AG04450 (cell line): ENCODE measurements at regions of chr9 and their contacts with region 1.

Region 1: DNA sequence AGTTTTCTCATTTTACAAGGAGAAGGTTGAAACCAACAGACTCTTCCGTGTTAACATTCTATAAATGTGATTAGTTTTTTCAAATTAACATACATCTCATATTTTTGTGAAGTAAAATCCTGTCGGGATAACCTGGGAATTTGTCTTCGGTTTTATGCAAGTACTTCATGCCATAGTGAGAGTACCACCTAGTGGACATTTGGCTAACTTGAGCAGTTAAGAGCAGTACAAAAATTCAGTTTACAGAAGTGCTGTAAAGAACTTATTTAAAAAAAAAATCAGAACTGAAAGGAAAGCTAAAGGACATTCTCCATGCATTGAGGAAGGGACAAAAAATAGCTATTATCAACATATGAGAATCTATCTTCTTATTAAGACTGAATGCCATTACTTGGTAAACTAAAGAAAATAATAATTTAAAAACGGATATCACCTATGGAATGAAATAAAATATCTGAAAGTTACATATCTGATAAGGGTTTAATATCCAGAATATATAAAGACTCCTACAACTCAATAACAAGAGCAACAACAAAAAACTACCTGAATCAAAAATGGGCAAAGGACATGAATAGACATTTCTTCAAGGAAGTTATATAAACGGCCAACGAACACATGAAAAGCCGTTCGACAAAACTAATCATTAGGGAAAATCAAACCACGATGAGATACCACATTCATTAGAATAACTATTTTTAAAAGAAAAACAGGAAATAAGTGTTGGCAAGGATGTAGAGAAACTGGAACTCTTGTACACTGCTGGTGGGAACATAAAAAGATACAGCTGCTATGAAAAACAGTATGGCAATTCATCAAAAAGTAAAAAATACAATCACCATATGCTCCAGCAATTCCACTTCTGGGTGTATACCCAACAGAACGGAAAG is 117.0 kb upstream of the GNA14 start:
- DNase-seq: peak; percentile 50
- H3K4me3 ChIP-seq: no peak overlapping the region
- H3K27ac ChIP-seq: no peak overlapping the region
- H3K27me3 ChIP-seq: no peaks in the 10 kb centered on the region
- CTCF ChIP-seq: peak; percentile 73

Region 2: GRCh38 chr9:77793904-77794303 is 28.8 kb after region 1 on chr9:
- CTCF ChIA-PET with region 1: interaction called, 13 read pairs
- POLR2A ChIA-PET with region 1: no interaction called
- DNase-seq: no peak
- H3K4me3 ChIP-seq: no peak overlapping the region
- H3K27ac ChIP-seq: no peak overlapping the region
- H3K27me3 ChIP-seq: no peaks in the 10 kb centered on the region
- CTCF ChIP-seq: peak; percentile 10; the same call in 1 of the 2 replicates